AG04450 (cell line): ENCODE measurements at regions of chr14 and their contacts with region 1.

Region 1: GRCh38 chr14:92135267-92135666 is 13.5 kb downstream of the CPSF2 start:
- DNase-seq: no peak
- H3K4me3 ChIP-seq: no peak overlapping the region
- H3K27ac ChIP-seq: no peak overlapping the region
- H3K27me3 ChIP-seq: no peaks in the 10 kb centered on the region
- CTCF ChIP-seq: peak; percentile 67

Region 2: DNA sequence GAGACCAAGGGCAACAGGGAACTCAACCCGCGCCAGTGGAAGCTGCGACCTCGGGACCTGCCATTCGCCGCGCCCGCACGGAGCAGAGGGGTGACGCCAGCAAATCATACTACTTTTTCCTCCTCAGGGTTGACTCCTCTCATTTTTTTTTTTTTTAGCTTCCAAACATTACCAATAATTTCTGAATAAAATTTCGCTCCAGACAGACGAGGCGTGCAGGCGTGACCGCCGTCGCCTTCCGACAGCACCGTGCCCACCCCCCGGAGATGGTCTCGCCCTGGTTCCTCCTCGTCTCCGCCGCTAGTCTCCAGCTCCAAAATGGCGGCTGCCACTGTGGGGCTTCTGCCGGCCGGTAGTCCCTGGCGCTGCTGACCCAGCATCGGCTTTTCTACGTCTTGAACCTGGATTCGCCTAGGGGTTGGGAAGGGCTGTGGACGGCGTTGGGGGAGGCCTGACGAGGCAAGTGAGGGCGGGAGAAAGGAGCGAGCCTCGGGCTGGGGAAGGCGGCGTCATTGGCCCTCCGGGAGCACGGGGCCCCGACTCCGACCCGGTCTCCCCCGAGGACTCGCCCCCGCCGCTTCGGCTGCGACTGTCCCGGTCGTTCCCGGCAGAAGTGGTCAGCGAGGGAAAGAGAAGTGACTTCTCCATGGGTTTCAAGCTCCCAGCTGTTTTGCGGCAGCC is 13.5 kb before region 1 on chr14 and contains the starts of genes CPSF2 and NDUFB1:
- CTCF ChIA-PET with region 1: interaction called, 12 read pairs
- POLR2A ChIA-PET with region 1: interaction called, 3 read pairs
- DNase-seq: no peak
- H3K4me3 ChIP-seq: peak within 1 kb of the TSS; percentile 95
- H3K27ac ChIP-seq: peak within 1 kb of the TSS; percentile 92
- H3K27me3 ChIP-seq: no peaks in the 10 kb centered on the region
- CTCF ChIP-seq: no peak
- polyA plus RNA-seq, gene CPSF2: 45.5 and 55.3 TPM in 2 replicates
- polyA plus RNA-seq, gene NDUFB1: 345 and 448 TPM in 2 replicates

Region 3: DNA sequence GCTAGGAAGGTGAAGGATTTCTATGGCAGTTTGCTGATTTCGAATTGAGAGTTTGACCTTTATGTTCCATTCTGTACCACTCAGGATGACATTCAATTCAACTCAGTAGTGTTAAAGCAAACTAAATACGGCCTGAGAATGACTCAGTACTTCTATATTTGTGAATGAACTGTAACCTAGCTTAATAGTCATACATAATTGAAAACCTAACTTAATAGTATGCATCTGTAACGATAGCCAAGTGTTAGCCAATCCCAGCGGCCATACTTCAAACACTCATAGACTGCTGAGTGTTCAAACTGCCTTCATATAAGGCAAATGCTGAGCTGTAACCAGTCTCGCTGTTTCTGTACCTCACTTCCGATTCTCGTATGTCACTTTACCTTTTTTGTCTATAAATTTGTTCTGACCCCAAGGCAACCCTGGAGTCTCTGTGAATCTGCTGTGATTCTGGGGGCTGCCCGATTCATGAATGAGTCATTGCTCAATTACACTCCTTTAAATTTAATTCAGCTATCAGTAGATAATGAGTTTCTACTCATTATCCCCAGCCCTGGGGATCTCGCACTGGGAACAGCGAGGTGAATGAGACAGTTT is 89.2 kb after region 1 on chr14:
- CTCF ChIA-PET with region 1: no interaction called
- POLR2A ChIA-PET with region 1: no interaction called
- DNase-seq: no peak
- H3K4me3 ChIP-seq: no peak overlapping the region
- H3K27ac ChIP-seq: no peak overlapping the region
- H3K27me3 ChIP-seq: no peaks in the 10 kb centered on the region
- CTCF ChIP-seq: no peak

Region 4: DNA sequence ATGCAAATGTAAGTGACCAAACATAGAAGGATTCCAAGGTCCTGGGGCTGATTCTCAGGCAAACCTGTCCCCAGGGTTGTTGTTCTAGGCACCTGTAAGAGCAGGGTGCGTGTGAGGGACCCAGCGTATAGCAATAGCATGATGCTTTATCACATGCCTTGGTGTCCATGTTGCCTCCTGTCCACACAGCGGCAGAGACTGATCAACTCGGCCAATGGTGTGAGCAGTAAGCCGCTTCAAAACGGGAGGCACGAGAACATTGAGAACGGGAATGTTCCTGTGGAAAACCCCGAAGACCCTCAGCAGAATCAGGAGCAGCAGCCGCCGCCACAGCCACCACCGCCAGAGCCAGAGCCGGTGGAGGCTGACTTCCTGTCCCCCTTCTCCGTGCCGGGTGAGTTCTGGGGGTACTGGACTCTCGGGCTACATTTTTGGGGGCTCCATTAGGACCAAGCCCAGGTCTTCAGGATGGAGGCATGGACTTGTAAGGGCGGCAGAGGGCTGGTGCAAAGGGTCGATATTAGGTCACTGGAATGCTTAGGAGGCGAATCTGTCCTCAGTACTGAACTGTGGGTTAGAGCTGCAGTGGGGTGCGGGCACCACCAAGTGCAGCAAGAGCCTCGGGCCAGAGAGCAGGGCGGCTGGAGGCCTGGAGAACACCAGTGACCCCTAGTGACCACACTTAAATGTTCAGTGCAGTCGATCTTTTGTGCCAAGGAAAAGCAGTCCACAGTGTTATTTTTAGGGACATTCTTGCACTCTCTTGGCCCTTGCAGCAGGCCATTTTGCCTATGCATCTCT is 321.1 kb after region 1 on chr14:
- CTCF ChIA-PET with region 1: interaction called, 28 read pairs
- POLR2A ChIA-PET with region 1: no interaction called
- DNase-seq: peak; percentile 54
- H3K4me3 ChIP-seq: no peak overlapping the region
- H3K27ac ChIP-seq: no peak overlapping the region
- H3K27me3 ChIP-seq: peaks cover 3% of the 10 kb centered on the region
- CTCF ChIP-seq: peak; percentile 85